Sigmoid colon (tissue), 7 donors: ENCODE measurements at regions of chr1 and their contacts with region 1.

Region 1: DNA sequence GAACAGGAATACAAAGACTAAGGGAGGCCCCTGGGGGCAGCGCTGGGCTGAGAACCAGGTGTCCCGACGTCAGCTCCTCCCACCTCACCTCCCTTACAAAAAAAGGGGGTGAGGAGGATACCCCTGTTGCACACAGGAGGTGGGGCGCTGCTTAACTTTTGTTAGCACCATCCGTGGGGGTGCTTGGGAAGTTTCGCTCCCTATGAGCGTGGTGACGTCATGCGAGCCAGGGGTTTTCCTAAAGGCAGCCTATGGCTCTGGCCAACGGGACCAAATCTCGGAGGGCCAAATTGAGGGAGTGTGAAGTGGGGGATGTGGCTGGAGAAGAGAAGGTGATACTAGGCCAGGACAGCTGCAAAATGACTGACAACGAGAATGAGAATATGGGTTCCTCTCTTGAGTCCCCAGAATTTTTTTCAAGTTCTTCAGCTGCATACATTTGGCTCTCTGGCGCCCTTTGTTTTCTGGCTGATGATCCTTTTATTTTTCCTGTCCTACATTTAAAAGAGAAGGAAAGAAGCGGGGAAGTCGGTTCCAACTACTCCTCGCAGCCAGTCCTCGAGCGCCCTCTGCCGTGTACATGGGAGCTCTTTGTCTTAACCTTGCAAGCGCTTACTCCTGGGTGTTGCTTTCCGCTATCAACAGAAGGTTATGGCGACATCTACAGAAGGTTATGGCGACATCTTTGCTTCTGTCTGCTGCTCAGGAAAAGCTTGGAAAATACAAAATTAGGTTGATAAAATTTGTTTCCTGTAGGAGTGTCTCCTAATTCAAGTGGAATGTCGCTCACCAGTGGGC is 48.0 kb upstream of the ZC3H11B start:
- DNase-seq: peak; percentile 94
- H3K4me3 ChIP-seq: peak overlapping the region in 3 of 4 donors; percentile 2 to 33 (median 27)
- H3K27ac ChIP-seq: peak overlapping the region; percentile 16 to 39 (median 25)
- H3K4me1 ChIP-seq: peaks cover 0 to 12% (median 3%) of the 10 kb centered on the region in 4 donors
- H3K27me3 ChIP-seq: no peaks in the 10 kb centered on the region
- CTCF ChIP-seq: peak in 3 of 4 experiments; percentile 49 to 70 (median 50)
- EP300 ChIP-seq: no peak
- POLR2A ChIP-seq: no peak

Region 2: GRCh38 chr1:219812491-219813203 is 151.8 kb after region 1 on chr1:
- intact Hi-C with region 1: loop called (anchors 5 kb)
- DNase-seq: no peak
- H3K4me3 ChIP-seq: no peak overlapping the region
- H3K27ac ChIP-seq: no peak overlapping the region
- H3K4me1 ChIP-seq: peaks cover 0 to 9% (median 0%) of the 10 kb centered on the region in 4 donors
- H3K27me3 ChIP-seq: peaks cover 0 to 3% (median 0%) of the 10 kb centered on the region in 3 donors
- CTCF ChIP-seq: peak; percentile 18 to 59 (median 46)
- EP300 ChIP-seq: no peak
- POLR2A ChIP-seq: no peak

Region 3: GRCh38 chr1:220084460-220084859 is 423.6 kb after region 1 on chr1:
- intact Hi-C with region 1: no loop called
- DNase-seq: no peak
- H3K4me3 ChIP-seq: no peak overlapping the region
- H3K27ac ChIP-seq: no peak overlapping the region
- H3K4me1 ChIP-seq: no peaks in the 10 kb centered on the region
- H3K27me3 ChIP-seq: no peaks in the 10 kb centered on the region
- CTCF ChIP-seq: no peak
- EP300 ChIP-seq: no peak
- POLR2A ChIP-seq: no peak